Heart right ventricle (tissue), 16 donors: ENCODE measurements at regions of chr2 and their contacts with region 1.

Region 1: GRCh38 chr2:157789933-157790511 is 86.1 kb downstream of the ACVR1 start:
- DNase-seq: peak; percentile 48 to 61
- ATAC-seq: peak; percentile 77 to 98 (median 90)
- H3K4me3 ChIP-seq: no peak overlapping the region
- H3K27ac ChIP-seq: peak overlapping the region; percentile 11 to 88 (median 67)
- H3K4me1 ChIP-seq: peaks cover 4 to 74% (median 61%) of the 10 kb centered on the region in 9 donors
- H3K27me3 ChIP-seq: no peaks in the 10 kb centered on the region
- CTCF ChIP-seq: no peak

Region 2: GRCh38 chr2:157559061-157559460 is 231.0 kb before region 1 on chr2:
- intact Hi-C with region 1: no loop called
- DNase-seq: no peak
- ATAC-seq: no peak
- H3K4me3 ChIP-seq: no peak overlapping the region
- H3K27ac ChIP-seq: no peak overlapping the region
- H3K4me1 ChIP-seq: no peaks in the 10 kb centered on the region
- H3K27me3 ChIP-seq: no peaks in the 10 kb centered on the region
- CTCF ChIP-seq: no peak

Region 3: DNA sequence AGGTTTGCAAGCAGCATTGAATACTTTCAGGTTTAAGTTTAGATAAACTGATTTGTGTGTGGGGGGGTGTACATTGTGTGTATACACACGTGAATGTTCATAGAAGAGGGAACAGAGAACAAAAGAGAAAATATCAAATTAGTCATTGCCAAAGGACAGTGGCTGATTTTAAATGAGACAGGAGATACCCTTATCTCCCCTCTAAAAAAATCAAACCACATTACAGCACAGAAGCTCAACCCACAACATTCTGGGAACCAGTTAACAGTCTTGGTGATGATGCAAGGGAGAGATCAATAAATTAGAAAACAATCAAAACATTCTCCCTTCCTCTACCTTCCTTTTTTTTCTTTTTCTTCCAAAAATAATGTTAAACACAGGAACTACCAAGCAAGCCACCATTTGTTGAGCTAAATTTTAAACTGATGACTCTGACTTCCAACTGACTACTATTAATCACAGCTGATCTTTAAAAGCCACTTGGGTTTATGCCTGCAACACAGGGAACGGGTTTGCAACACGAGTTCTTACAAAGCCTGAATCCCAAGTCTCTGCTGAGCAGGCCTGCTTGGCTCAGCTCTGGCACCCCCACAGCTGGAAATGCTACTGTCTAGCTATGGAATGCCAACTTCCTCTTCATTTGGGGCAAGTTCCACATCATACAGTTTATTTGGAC is 42.2 kb before region 1 on chr2:
- intact Hi-C with region 1: no loop called
- DNase-seq: no peak
- ATAC-seq: peak in 2 of 8 donors; percentile 47 to 81
- H3K4me3 ChIP-seq: no peak overlapping the region
- H3K27ac ChIP-seq: no peak overlapping the region
- H3K4me1 ChIP-seq: peaks cover 0 to 29% (median 8%) of the 10 kb centered on the region in 9 donors
- H3K27me3 ChIP-seq: no peaks in the 10 kb centered on the region
- CTCF ChIP-seq: no peak

Region 4: GRCh38 chr2:157830696-157831570 is 40.9 kb after region 1 on chr2:
- intact Hi-C with region 1: loop called in 3 of 10 experiments (anchors 5 kb)
- DNase-seq: no peak
- ATAC-seq: peak in 6 of 8 donors; percentile 55 to 86 (median 76)
- H3K4me3 ChIP-seq: no peak overlapping the region
- H3K27ac ChIP-seq: peak overlapping the region in 9 of 10 donors; percentile 17 to 69 (median 54)
- H3K4me1 ChIP-seq: peaks cover 7 to 39% (median 28%) of the 10 kb centered on the region in 9 donors
- H3K27me3 ChIP-seq: no peaks in the 10 kb centered on the region
- CTCF ChIP-seq: no peak

Region 5: DNA sequence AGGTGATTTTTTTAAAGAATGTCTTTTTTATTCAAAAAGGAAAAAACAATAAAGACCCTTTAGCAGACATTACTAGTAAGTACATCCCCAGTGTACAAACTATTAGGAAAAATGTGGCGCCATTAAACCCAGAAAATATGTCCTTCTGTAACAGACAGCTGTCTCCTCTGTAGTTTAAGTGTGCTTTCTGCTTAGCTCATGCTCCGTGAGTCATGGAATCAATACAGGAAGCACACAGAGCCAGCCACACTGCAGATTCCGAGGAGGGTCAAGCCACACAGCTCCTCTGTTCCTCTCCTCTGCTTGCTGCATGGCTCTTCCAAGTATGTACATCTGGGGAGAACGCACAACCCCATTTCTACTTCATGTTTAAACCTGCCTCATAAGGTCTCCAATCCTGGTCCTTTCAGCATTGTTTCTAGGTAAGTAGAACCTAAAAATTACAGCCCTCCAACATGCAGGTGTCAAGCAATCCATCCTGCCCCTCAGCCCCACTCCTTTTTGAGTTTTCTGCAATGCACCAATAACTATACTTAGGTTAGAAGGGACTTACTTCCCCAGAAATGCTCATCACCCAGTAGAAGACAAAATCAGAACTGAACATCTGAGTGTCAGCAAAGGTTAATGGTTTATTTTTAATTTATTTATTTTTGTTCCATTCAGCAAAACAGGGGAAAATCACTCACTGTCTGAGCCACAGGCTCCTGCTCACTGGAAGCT is 48.6 kb after region 1 on chr2:
- intact Hi-C with region 1: loop called in 3 of 10 experiments (anchors 5 kb)
- DNase-seq: peak; percentile 25 to 54
- ATAC-seq: peak; percentile 67 to 87 (median 78)
- H3K4me3 ChIP-seq: peak overlapping the region in 8 of 10 donors; percentile 1 to 49 (median 42)
- H3K27ac ChIP-seq: peak overlapping the region; percentile 42 to 95 (median 81)
- H3K4me1 ChIP-seq: peaks cover 13 to 84% (median 74%) of the 10 kb centered on the region in 9 donors
- H3K27me3 ChIP-seq: no peaks in the 10 kb centered on the region
- CTCF ChIP-seq: no peak